IMR-90 (cell line): ENCODE measurements at regions of chr17 and their contacts with region 1.

Region 1: GRCh38 chr17:73304971-73305812 is 6.6 kb downstream of the CDC42EP4 start:
- DNase-seq: peak; percentile 78
- ATAC-seq: peak; percentile 62
- H3K4me3 ChIP-seq: peak overlapping the region; percentile 5
- H3K27ac ChIP-seq: peak overlapping the region; percentile 90
- H3K4me1 ChIP-seq: peaks cover 37% of the 10 kb centered on the region
- H3K27me3 ChIP-seq: no peaks in the 10 kb centered on the region
- CTCF ChIP-seq: peak; percentile 43
- POLR2A ChIP-seq: no peak
- RAD21 ChIP-seq: peak; percentile 45

Region 2: DNA sequence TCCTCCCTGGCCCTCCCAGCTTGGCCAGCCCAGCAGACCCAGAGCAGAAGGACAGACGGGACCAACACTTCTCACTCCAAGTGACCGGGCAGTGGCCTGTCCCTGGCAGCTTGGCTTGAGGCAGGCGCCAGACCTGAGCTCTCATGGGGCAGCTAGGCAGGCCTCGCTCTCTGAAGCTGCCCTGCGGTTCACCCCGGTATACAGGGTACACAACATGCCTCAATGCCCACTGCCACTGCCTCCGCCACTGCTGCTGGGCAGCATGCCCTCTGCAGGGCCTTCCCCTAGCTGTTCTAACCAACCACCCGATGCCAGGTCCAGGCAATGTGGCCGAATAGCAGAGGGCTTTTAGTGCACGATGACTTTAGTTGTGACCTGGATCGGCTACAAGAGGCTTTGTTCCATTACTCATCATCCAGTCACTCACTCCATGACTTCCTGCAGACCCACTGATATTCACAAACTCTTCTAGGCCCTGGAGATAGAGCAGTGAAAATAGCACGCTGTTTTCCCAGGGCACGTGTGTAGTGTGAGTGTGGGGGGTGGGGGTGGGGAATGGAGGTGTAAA is 13.1 kb before region 1 on chr17:
- CTCF ChIA-PET with region 1: interaction called, 6 read pairs
- POLR2A ChIA-PET with region 1: no interaction called
- dilution Hi-C with region 1: no loop called
- in situ Hi-C with region 1: no loop called
- intact Hi-C with region 1: loop called (anchors 2 kb)
- DNase-seq: peak; percentile 83
- ATAC-seq: peak; percentile 24
- H3K4me3 ChIP-seq: no peak overlapping the region
- H3K27ac ChIP-seq: peak overlapping the region; percentile 66
- H3K4me1 ChIP-seq: peaks cover 42% of the 10 kb centered on the region
- H3K27me3 ChIP-seq: no peaks in the 10 kb centered on the region
- CTCF ChIP-seq: no peak
- POLR2A ChIP-seq: peak; percentile 29; the same call in 1 of the 2 replicates
- RAD21 ChIP-seq: no peak; the same call in 1 of the 2 replicates

Region 3: GRCh38 chr17:73410586-73411312 is 105.6 kb after region 1 on chr17:
- CTCF ChIA-PET with region 1: no interaction called
- POLR2A ChIA-PET with region 1: interaction called, 14 read pairs
- dilution Hi-C with region 1: no loop called
- in situ Hi-C with region 1: no loop called
- intact Hi-C with region 1: no loop called
- DNase-seq: no peak
- ATAC-seq: no peak
- H3K4me3 ChIP-seq: no peak overlapping the region
- H3K27ac ChIP-seq: no peak overlapping the region
- H3K4me1 ChIP-seq: no peaks in the 10 kb centered on the region
- H3K27me3 ChIP-seq: peaks cover 5% of the 10 kb centered on the region; the same call in 1 of the 2 replicates
- CTCF ChIP-seq: no peak
- POLR2A ChIP-seq: no peak
- RAD21 ChIP-seq: no peak